Caco-2 (cell line): ENCODE measurements at regions of chrX and their contacts with region 1.

Region 1: DNA sequence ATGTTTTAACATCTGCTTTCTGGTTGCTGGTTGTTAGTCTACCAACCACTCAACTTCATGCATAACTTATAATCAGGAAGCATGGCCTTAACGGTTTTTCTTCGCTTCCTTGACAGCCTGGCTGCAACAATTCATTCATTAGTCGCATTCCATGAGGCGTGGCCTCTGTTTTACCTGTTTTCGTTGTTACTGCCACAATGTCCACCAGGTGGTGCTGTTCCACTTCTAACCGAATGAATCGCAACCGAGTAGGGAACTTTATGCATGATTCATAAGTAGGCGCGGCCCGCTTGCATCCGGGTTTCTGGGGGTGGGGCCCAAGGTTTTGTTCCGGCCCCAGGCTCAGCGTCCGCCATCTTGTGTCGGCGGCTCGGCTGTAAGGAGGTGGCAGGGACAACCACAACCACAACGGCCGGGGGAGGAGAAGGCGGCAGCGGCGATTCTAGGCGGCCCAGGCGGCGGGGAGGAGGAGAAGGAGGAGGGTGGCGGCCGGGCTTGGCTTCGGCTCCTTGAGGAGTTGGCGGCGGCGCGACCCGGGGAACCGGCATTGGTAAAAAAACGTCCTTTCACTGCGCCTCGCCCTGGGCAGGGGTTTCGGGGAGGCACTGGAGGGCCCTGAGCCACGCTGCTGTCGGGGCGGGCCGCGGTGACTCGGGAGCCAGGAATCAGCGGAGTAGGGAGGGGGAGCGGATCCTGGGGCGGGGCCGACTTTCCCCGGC is at the start of gene UBA1:
- DNase-seq: peak; percentile 91 to 92
- H3K4me3 ChIP-seq: peak within 1 kb of the TSS; percentile 75
- H3K4me3 Mint-ChIP-seq: peak within 1 kb of the TSS; percentile 82
- H3K27ac Mint-ChIP-seq: peak within 1 kb of the TSS; percentile 94
- H3K4me1 ChIP-seq: peaks cover 3% of the 10 kb centered on the region; the same call in 1 of the 2 replicates
- H3K4me1 Mint-ChIP-seq: peaks cover 9% of the 10 kb centered on the region
- H3K27me3 ChIP-seq: no peaks in the 10 kb centered on the region
- H3K27me3 Mint-ChIP-seq: no peaks in the 10 kb centered on the region
- CTCF ChIP-seq: peak; percentile 46
- total RNA-seq, gene UBA1: 156 and 157 TPM in 2 replicates

Region 2: DNA sequence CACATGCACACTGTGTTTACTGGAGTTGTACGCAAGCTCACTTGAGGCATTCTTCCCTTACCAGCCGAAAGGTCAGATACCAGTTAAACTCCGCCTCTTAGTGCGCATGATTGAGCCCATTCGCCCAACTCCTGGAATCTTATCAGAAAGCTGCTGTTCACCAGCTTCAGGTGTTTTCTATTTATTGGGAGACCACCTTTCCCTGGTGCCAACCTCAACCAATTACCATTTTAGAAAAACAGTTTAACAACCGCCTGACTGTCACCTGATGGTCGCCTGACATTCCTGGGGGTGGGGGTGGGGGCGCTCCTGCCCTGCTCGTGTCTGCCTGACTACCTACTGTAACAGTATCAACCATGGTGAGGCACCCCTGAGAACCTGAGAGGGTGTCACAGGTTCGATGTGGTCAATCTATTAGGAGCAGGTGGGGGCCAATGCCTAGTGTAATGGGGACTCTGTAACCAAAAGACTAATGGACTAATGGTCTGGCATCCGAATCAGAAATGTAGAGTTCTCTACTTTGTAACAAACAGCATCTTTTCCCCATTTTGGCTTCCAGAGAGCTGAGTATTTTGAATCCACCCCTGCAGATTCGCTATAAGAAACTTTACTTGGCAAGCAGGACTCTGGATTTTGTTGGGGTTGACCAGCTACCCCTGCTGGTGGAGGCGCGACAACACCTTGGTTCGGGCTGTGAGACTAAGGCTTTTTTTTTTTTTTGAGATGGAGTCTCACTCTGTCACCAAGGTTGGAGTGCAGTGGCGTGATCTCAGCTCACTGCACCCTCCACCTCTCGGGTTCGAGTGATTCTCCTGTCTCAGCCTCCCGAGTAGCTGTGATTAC is 118.5 kb after region 1 on chrX:
- CTCF ChIA-PET with region 1: no interaction called
- POLR2A ChIA-PET with region 1: interaction called, 4 read pairs
- intact Hi-C with region 1: loop called (anchors 1 kb)
- DNase-seq: peak; percentile 54 to 65
- H3K4me3 ChIP-seq: no peak overlapping the region
- H3K4me3 Mint-ChIP-seq: no peak overlapping the region
- H3K27ac Mint-ChIP-seq: no peak overlapping the region
- H3K4me1 ChIP-seq: no peaks in the 10 kb centered on the region
- H3K4me1 Mint-ChIP-seq: no peaks in the 10 kb centered on the region
- H3K27me3 ChIP-seq: no peaks in the 10 kb centered on the region
- H3K27me3 Mint-ChIP-seq: no peaks in the 10 kb centered on the region
- CTCF ChIP-seq: peak; percentile 58 to 63

Region 3: DNA sequence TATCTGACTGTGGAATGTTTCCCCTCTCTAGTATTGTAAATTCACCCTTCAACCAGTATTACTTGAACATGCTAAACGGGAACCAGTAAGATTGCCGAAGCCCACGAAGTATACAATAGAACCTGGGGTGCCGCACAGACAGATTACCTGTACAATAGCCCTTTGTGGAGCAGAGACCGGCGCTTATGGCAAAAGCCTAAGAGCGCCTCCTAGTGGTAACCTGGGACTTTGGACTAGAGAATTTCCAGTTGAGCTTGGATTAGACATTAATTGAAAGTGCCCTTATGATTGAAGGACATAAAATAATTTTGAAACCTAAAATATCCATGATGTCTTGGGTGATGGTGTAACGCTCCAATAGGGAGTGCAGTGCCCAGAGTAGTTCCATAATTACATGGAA is 190.9 kb after region 1 on chrX:
- CTCF ChIA-PET with region 1: interaction called, 5 read pairs
- POLR2A ChIA-PET with region 1: no interaction called
- intact Hi-C with region 1: loop called (anchors 1 kb)
- DNase-seq: peak; percentile 40 to 59
- H3K4me3 ChIP-seq: no peak overlapping the region
- H3K4me3 Mint-ChIP-seq: no peak overlapping the region
- H3K27ac Mint-ChIP-seq: no peak overlapping the region
- H3K4me1 ChIP-seq: no peaks in the 10 kb centered on the region
- H3K4me1 Mint-ChIP-seq: no peaks in the 10 kb centered on the region
- H3K27me3 ChIP-seq: no peaks in the 10 kb centered on the region
- H3K27me3 Mint-ChIP-seq: no peaks in the 10 kb centered on the region
- CTCF ChIP-seq: peak; percentile 48 to 56

Region 4: GRCh38 chrX:47482512-47483309 is 289.1 kb after region 1 on chrX and contains the start of gene ZNF41:
- CTCF ChIA-PET with region 1: no interaction called
- POLR2A ChIA-PET with region 1: no interaction called
- intact Hi-C with region 1: loop called (anchors 5 kb)
- DNase-seq: peak; percentile 86 to 87
- H3K4me3 ChIP-seq: peak within 1 kb of the TSS; percentile 65
- H3K4me3 Mint-ChIP-seq: peak within 1 kb of the TSS; percentile 93
- H3K27ac Mint-ChIP-seq: peak within 1 kb of the TSS; percentile 61
- H3K4me1 ChIP-seq: no peaks in the 10 kb centered on the region
- H3K4me1 Mint-ChIP-seq: peaks cover 9% of the 10 kb centered on the region
- H3K27me3 ChIP-seq: no peaks in the 10 kb centered on the region
- H3K27me3 Mint-ChIP-seq: no peaks in the 10 kb centered on the region
- CTCF ChIP-seq: no peak
- total RNA-seq, gene ZNF41: 5.1 and 6.6 TPM in 2 replicates

Region 5: GRCh38 chrX:47523297-47523696 is 329.7 kb after region 1 on chrX:
- CTCF ChIA-PET with region 1: interaction called, 7 read pairs
- POLR2A ChIA-PET with region 1: no interaction called
- intact Hi-C with region 1: loop called (anchors 1 kb)
- DNase-seq: peak; percentile 63 to 86
- H3K4me3 ChIP-seq: peak overlapping the region; percentile 52
- H3K4me3 Mint-ChIP-seq: peak overlapping the region; percentile 68
- H3K27ac Mint-ChIP-seq: no peak overlapping the region
- H3K4me1 ChIP-seq: no peaks in the 10 kb centered on the region
- H3K4me1 Mint-ChIP-seq: no peaks in the 10 kb centered on the region
- H3K27me3 ChIP-seq: no peaks in the 10 kb centered on the region
- H3K27me3 Mint-ChIP-seq: peaks cover 3% of the 10 kb centered on the region
- CTCF ChIP-seq: peak; percentile 71 to 75

Region 6: DNA sequence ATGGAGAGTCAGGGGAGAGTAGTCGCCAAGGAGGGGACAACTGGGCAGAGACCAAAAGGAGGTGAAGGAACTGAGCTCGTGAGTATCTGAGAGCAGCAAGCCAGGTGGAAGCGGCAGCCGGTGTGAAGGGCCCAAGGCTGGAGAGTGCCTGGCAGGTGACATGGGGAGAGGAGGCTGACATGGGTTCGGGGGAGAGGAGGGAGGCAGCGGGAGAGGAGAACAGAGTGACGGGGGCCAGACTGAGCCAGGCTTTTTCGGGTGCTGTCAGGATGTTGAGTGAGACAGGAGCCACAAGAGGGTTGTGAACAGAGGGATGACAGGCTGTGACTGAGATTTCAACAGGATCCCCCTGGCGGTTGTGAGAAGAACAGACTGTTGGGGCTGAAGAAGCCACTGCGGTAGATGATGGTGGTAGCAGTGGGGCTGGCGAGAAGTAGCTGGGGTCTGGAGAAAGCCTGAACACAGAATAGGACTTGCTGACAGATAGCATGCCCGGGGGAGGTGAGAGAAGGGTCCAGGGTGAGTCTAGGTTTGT is 451.0 kb after region 1 on chrX:
- CTCF ChIA-PET with region 1: no interaction called
- POLR2A ChIA-PET with region 1: no interaction called
- intact Hi-C with region 1: loop called (anchors 10 kb)
- DNase-seq: no peak
- H3K4me3 ChIP-seq: no peak overlapping the region
- H3K4me3 Mint-ChIP-seq: no peak overlapping the region
- H3K27ac Mint-ChIP-seq: no peak overlapping the region
- H3K4me1 ChIP-seq: no peaks in the 10 kb centered on the region
- H3K4me1 Mint-ChIP-seq: peaks cover 13% of the 10 kb centered on the region
- H3K27me3 ChIP-seq: no peaks in the 10 kb centered on the region
- H3K27me3 Mint-ChIP-seq: no peaks in the 10 kb centered on the region
- CTCF ChIP-seq: no peak